Endothelial cell of umbilical vein (primary cell): ENCODE measurements at regions of chr19 and their contacts with region 1.

Region 1: DNA sequence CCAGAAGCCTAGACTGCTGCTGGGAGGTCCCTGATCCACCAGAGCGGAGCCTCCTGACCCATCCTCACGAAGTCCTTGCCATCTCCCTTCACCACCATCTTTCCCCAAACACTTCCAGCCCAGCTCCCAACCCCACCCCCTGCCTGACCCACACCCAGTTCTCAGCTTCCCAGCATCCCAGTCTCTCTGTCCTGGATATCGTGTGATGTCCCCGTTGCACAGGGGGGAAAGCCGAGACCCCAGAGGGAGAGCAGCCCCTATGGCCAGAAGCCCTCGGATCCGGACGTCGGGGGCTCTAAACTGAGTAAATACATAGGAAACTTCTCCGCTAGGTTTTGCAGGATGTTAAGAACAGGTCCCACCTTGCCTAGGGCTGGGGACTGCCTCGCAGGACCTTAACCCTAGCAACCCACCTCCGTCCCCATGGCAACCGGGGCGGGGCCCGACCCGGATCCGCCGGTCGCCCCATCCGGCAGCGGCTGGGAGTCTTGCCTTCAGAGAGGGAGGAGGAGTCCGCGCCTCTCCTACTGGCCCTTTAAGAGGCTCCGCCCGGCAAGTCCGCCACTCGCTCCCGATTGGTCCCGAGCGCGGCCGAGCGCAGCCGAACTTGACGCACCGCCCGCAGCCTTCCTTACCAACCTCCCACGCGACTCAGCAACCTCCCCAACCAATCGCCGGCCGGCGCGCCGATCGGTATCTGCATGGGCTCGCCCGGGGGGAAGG is 451 bp upstream of the HMG20B start:
- DNase-seq: peak; percentile 100
- H3K4me3 ChIP-seq: peak overlapping the region; percentile 26 to 33 (median 31)
- H3K27ac ChIP-seq: peak overlapping the region; percentile 30
- H3K4me1 ChIP-seq: peaks cover 15% of the 10 kb centered on the region
- H3K27me3 ChIP-seq: no peaks in the 10 kb centered on the region
- CTCF ChIP-seq: no peak
- POLR2A ChIP-seq: no peak

Region 2: GRCh38 chr19:3505598-3506383 is 66.5 kb before region 1 on chr19 and contains the start of gene FZR1:
- CTCF ChIA-PET with region 1: no interaction called
- POLR2A ChIA-PET with region 1: no interaction called
- dilution Hi-C with region 1: no loop called
- intact Hi-C with region 1: loop called (anchors 2 kb)
- DNase-seq: peak; percentile 98
- H3K4me3 ChIP-seq: peak within 1 kb of the TSS; percentile 76 to 91 (median 77)
- H3K27ac ChIP-seq: peak within 1 kb of the TSS; percentile 94
- H3K4me1 ChIP-seq: peaks cover 10% of the 10 kb centered on the region
- H3K27me3 ChIP-seq: no peaks in the 10 kb centered on the region
- CTCF ChIP-seq: no peak
- POLR2A ChIP-seq: peak; percentile 47
- total RNA-seq, gene FZR1: 60.4 and 60.5 TPM in 2 replicates

Region 3: GRCh38 chr19:3557461-3558248 is 14.6 kb before region 1 on chr19 and contains the start of gene MFSD12:
- CTCF ChIA-PET with region 1: interaction called, 9 read pairs
- POLR2A ChIA-PET with region 1: interaction called, 6 read pairs
- dilution Hi-C with region 1: no loop called
- intact Hi-C with region 1: loop called (anchors 1 kb)
- DNase-seq: peak; percentile 91
- H3K4me3 ChIP-seq: peak within 1 kb of the TSS; percentile 49 to 63 (median 58)
- H3K27ac ChIP-seq: peak within 1 kb of the TSS; percentile 21
- H3K4me1 ChIP-seq: peaks cover 24% of the 10 kb centered on the region
- H3K27me3 ChIP-seq: no peaks in the 10 kb centered on the region
- CTCF ChIP-seq: no peak
- POLR2A ChIP-seq: peak; percentile 68
- total RNA-seq, gene MFSD12: 78.9 and 80.4 TPM in 2 replicates

Region 4: DNA sequence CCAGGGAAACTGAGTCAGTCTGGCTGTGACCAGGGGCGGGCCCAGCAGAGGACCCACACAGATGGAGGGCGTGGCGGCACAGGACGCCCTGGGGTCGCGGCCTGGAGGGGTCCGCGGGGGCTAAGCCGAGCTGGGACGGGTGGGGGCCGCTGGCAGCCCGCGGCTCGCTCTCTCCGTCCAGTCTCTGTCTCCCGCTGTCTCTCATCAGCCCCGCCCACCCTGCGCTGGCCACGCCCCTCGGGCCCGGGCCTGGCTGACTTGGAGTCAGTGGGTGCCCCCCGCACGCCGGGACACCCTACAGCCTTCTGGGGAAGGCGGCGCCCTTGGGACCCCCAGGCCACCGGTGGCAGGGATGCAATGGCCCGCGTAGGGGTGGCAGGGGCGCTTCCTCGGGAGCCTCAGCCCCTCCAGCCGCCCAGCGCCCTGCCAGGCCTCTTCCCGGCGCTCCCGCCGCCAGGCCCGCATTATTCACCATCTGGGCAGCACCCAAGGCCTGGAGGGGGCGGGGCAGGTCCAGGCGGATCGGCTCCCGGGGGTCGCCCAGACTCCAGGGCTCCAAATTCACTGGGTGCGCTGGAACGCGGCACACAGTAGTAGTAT is 34.5 kb after region 1 on chr19 and contains the start of gene TBXA2R:
- CTCF ChIA-PET with region 1: interaction called, 3 read pairs
- POLR2A ChIA-PET with region 1: no interaction called
- dilution Hi-C with region 1: no loop called
- intact Hi-C with region 1: loop called (anchors 5 kb)
- DNase-seq: peak; percentile 69
- H3K4me3 ChIP-seq: peak within 1 kb of the TSS; percentile 39 to 48 (median 39)
- H3K27ac ChIP-seq: peak within 1 kb of the TSS; percentile 34
- H3K4me1 ChIP-seq: peaks cover 23% of the 10 kb centered on the region
- H3K27me3 ChIP-seq: no peaks in the 10 kb centered on the region
- CTCF ChIP-seq: no peak
- POLR2A ChIP-seq: peak; percentile 17
- total RNA-seq, gene TBXA2R: 2.9 and 3.4 TPM in 2 replicates

Region 5: GRCh38 chr19:3626473-3627350 is 54.4 kb after region 1 on chr19 and contains the start of gene CACTIN:
- CTCF ChIA-PET with region 1: interaction called, 4 read pairs
- POLR2A ChIA-PET with region 1: no interaction called
- dilution Hi-C with region 1: no loop called
- intact Hi-C with region 1: loop called (anchors 2 kb)
- DNase-seq: peak; percentile 97
- H3K4me3 ChIP-seq: peak within 1 kb of the TSS; percentile 70 to 94 (median 88)
- H3K27ac ChIP-seq: peak within 1 kb of the TSS; percentile 93
- H3K4me1 ChIP-seq: peaks cover 14% of the 10 kb centered on the region
- H3K27me3 ChIP-seq: no peaks in the 10 kb centered on the region
- CTCF ChIP-seq: no peak
- POLR2A ChIP-seq: peak; percentile 77
- total RNA-seq, gene CACTIN: 36.1 and 36.4 TPM in 2 replicates

Region 6: DNA sequence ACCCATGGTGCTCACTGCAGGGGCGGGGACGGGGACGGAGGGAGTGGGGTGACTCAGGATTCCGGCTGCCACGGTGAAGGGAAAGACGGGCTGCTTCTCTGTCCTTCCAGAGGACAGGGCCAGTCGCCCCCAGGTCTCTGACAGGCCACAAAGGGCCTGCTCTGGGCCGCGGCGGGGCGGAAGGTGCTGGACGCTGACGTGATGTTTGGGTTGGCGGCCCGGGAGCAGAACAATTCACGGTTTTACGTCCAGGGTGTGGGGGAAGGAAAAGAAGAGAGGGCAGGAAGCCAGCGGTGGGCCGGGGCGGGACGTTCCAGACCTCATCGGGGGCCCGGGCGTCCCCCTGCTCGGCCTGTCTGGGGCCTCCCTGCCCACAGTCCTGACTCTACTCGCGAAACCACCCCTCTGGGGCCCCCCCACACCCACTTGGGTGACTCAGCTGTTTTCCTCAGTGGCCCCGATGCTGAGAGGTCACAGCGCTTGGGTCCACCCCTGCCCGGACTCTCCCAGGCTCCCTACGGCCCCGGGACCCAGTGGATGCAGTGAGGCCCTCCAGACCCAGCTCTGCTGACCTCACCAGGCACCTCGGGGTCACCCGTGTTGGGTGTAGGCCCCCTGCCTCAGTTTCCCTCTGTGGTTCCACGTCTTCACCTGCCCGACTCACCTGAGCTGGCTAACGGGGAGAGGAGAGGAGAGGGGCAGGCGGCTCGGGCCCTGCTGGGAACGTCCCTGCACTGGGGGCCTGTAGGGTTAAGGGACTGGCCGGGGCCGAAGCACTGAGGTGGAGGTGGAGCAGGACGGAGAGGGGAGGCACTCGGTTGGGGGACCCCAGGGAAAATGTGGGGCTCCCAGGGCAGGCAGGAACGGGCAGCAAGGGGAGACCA is 98.7 kb after region 1 on chr19:
- CTCF ChIA-PET with region 1: no interaction called
- POLR2A ChIA-PET with region 1: no interaction called
- dilution Hi-C with region 1: no loop called
- intact Hi-C with region 1: loop called (anchors 5 kb)
- DNase-seq: peak; percentile 84
- H3K4me3 ChIP-seq: peak overlapping the region in 2 of 3 experiments; percentile 4 to 15
- H3K27ac ChIP-seq: peak overlapping the region; percentile 98
- H3K4me1 ChIP-seq: peaks cover 28% of the 10 kb centered on the region
- H3K27me3 ChIP-seq: no peaks in the 10 kb centered on the region
- CTCF ChIP-seq: no peak
- POLR2A ChIP-seq: peak; percentile 45

Region 7: GRCh38 chr19:3821857-3822364 is 249.6 kb after region 1 on chr19:
- CTCF ChIA-PET with region 1: no interaction called
- POLR2A ChIA-PET with region 1: no interaction called
- dilution Hi-C with region 1: no loop called
- intact Hi-C with region 1: no loop called
- DNase-seq: peak; percentile 52
- H3K4me3 ChIP-seq: no peak overlapping the region
- H3K27ac ChIP-seq: no peak overlapping the region
- H3K4me1 ChIP-seq: no peaks in the 10 kb centered on the region
- H3K27me3 ChIP-seq: no peaks in the 10 kb centered on the region
- CTCF ChIP-seq: peak; percentile 99
- POLR2A ChIP-seq: no peak